Heart right ventricle (tissue), 16 donors: ENCODE measurements at regions of chr16 and their contacts with region 1.

Region 1: DNA sequence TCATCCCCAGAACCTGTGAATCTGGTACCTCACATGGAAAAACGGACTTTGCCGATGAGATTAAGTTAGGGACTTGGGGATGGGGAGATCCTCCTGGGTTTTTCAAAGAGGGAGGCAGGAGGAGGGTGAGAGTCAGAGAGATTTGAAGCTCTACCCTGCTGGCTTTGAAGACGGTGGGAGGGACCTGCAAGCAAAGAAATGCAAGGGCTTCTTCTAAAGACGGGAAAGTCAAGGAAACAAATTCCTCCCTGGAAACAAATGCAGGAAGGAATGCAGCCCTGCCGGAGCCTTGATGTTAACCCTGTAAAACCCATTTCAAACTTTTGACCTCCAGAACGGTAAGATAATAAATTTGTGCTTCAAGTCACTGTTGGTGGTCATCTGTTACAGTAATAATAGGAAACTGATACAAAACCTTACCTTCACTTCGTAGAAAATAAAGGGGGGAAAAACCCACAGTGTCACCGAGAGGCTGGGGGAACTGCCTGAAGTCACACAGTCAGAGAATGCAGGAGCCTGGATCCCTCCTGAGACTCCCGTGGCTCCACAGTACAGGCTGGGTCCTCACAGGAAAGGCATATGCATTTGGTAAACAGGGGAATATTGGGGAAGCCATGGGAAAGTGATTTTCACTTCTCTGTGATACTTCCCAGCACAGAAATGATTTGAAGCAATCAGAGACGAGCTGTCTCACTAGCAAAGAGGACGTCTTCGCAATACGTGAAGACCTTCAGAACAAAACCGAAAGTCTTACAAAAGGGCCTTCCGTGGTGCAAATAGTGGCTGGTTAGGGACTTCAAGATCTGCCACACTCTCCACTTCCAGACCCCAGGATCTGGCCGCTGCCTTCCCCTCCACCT is 58.9 kb upstream of the CLEC3A start:
- DNase-seq: no peak
- ATAC-seq: no peak
- H3K4me3 ChIP-seq: no peak overlapping the region
- H3K27ac ChIP-seq: no peak overlapping the region
- H3K4me1 ChIP-seq: peaks cover 0 to 8% (median 0%) of the 10 kb centered on the region in 9 donors
- H3K27me3 ChIP-seq: peaks cover 0 to 30% (median 0%) of the 10 kb centered on the region in 7 donors
- CTCF ChIP-seq: no peak

Region 2: GRCh38 chr16:77788181-77789084 is 175.0 kb before region 1 on chr16 and contains the start of gene VAT1L:
- intact Hi-C with region 1: loop called in 1 of 10 experiments (anchors 10 kb)
- DNase-seq: peak; percentile 23 to 30
- ATAC-seq: peak; percentile 81 to 93 (median 88)
- H3K4me3 ChIP-seq: peak within 1 kb of the TSS; percentile 45 to 70 (median 64)
- H3K27ac ChIP-seq: no peak within 1 kb of the TSS
- H3K4me1 ChIP-seq: peaks cover 0 to 20% (median 8%) of the 10 kb centered on the region in 9 donors
- H3K27me3 ChIP-seq: peaks cover 4 to 70% (median 49%) of the 10 kb centered on the region in 7 donors
- CTCF ChIP-seq: no peak
- total RNA-seq, gene VAT1L: 7.3 to 61.0 (median 28.0) TPM

Region 3: GRCh38 chr16:77850636-77851333 is 112.6 kb before region 1 on chr16:
- intact Hi-C with region 1: loop called in 2 of 10 experiments (anchors 5 to 10 kb)
- DNase-seq: no peak
- ATAC-seq: peak in 3 of 8 donors; percentile 28 to 37 (median 30)
- H3K4me3 ChIP-seq: no peak overlapping the region
- H3K27ac ChIP-seq: no peak overlapping the region
- H3K4me1 ChIP-seq: peaks cover 0 to 11% (median 0%) of the 10 kb centered on the region in 9 donors
- H3K27me3 ChIP-seq: no peaks in the 10 kb centered on the region
- CTCF ChIP-seq: no peak

Region 4: DNA sequence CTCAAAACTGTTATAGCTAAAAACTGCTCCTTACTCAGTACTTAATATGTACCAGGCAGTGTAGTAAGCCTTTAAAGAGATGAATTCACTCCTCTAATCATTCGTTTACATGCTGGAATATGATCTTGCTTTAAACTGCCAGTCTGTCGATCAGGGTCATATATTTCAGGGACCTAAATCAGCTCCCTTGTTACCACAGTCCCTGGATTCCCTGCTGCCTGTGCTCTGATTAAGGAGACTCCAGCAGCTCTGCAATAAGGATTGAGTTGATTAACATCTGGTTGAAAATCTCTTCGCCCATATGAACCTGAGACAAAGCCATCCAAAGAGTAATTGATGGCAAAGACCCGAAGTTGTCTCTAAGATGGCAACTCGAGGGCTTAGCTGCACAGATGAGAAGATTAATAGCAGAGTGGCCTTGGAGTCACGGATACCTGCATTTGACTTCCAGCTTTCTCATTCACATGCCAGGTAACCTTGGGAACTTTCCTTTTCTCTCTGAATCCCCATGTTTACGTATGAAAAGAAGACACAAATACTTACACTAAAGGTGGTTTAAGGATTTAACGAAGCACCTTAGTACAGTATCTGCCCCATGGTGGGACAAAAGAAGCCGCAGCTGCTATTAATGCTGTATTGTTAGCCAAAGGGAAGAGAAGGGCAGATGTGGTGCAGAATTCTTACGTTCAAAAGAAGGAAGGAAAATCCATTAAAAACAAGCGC is 106.8 kb before region 1 on chr16:
- intact Hi-C with region 1: loop called in 4 of 10 experiments (anchors 2 to 10 kb)
- DNase-seq: no peak
- ATAC-seq: no peak
- H3K4me3 ChIP-seq: no peak overlapping the region
- H3K27ac ChIP-seq: peak overlapping the region in 1 of 10 donors; percentile 0
- H3K4me1 ChIP-seq: peaks cover 0 to 28% (median 5%) of the 10 kb centered on the region in 9 donors
- H3K27me3 ChIP-seq: no peaks in the 10 kb centered on the region
- CTCF ChIP-seq: no peak

Region 5: DNA sequence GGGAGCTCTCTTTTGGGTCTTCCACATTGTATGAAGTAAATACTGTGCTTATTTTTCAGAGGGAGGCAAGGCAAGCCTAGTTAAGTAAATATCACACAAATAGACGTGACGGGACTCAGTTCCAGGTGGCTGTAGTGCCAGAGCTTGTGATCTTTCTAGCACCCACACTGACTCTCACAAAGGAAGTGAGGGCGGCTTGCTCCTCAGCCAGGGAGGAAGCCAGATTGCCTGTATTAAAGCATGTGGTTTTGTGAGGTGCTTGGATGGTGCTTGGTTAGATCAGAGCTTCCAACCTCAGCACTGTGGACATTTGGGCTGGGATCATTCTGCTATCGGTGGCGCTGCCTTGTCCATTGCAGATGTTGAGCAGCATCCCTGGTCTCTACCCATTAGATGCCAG is 94.9 kb before region 1 on chr16:
- intact Hi-C with region 1: loop called in 1 of 10 experiments (anchors 10 kb)
- DNase-seq: no peak
- ATAC-seq: no peak
- H3K4me3 ChIP-seq: no peak overlapping the region
- H3K27ac ChIP-seq: peak overlapping the region in 2 of 10 donors; percentile 84 to 88
- H3K4me1 ChIP-seq: peaks cover 0 to 34% (median 16%) of the 10 kb centered on the region in 9 donors
- H3K27me3 ChIP-seq: no peaks in the 10 kb centered on the region
- CTCF ChIP-seq: no peak

Region 6: GRCh38 chr16:77898671-77899211 is 64.7 kb before region 1 on chr16:
- intact Hi-C with region 1: no loop called
- DNase-seq: no peak
- ATAC-seq: peak in 2 of 8 donors; percentile 18 to 54
- H3K4me3 ChIP-seq: no peak overlapping the region
- H3K27ac ChIP-seq: peak overlapping the region in 3 of 10 donors; percentile 5 to 25 (median 14)
- H3K4me1 ChIP-seq: peaks cover 0 to 29% (median 7%) of the 10 kb centered on the region in 9 donors
- H3K27me3 ChIP-seq: no peaks in the 10 kb centered on the region
- CTCF ChIP-seq: no peak

Region 7: DNA sequence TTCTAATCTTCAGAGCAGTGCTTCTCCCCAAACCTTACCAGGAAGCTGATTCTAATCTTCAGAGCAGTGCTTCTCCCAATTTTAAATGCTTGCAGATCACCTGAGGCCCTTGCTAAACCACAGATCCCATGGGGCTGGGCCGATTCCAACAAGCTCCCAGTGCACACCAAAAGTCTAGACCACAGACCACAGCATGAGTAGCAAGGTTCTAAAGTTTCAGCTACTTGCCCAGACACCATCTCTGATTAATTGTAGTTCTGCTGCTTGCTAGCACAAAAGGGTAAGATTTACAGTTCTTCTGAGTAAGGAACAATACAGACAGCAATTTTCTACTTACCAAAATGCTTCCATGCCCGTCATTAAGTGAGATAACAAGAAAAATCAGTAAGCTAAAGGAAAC is 71.1 kb after region 1 on chr16:
- intact Hi-C with region 1: no loop called
- DNase-seq: no peak
- ATAC-seq: no peak
- H3K4me3 ChIP-seq: no peak overlapping the region
- H3K27ac ChIP-seq: no peak overlapping the region
- H3K4me1 ChIP-seq: peaks cover 0 to 3% (median 0%) of the 10 kb centered on the region in 9 donors
- H3K27me3 ChIP-seq: no peaks in the 10 kb centered on the region
- CTCF ChIP-seq: no peak